CD8-positive, alpha-beta T cell (primary cell): ENCODE measurements at regions of chr2 and their contacts with region 1.

Region 1: GRCh38 chr2:157327621-157328500 is 2.2 kb upstream of the ERMN start:
- DNase-seq: peak; percentile 75 to 94 (median 89)
- ATAC-seq: peak; percentile 95
- H3K4me3 ChIP-seq: peak overlapping the region in 1 of 2 experiments; percentile 2
- H3K4me3 Mint-ChIP-seq: peak overlapping the region; percentile 64
- H3K27ac ChIP-seq: no peak overlapping the region
- H3K27ac Mint-ChIP-seq: peak overlapping the region; percentile 86
- H3K4me1 ChIP-seq: peaks cover 36% of the 10 kb centered on the region
- H3K4me1 Mint-ChIP-seq: peaks cover 53% of the 10 kb centered on the region
- H3K27me3 ChIP-seq: no peaks in the 10 kb centered on the region
- H3K27me3 Mint-ChIP-seq: no peaks in the 10 kb centered on the region
- CTCF ChIP-seq: peak; percentile 87

Region 2: DNA sequence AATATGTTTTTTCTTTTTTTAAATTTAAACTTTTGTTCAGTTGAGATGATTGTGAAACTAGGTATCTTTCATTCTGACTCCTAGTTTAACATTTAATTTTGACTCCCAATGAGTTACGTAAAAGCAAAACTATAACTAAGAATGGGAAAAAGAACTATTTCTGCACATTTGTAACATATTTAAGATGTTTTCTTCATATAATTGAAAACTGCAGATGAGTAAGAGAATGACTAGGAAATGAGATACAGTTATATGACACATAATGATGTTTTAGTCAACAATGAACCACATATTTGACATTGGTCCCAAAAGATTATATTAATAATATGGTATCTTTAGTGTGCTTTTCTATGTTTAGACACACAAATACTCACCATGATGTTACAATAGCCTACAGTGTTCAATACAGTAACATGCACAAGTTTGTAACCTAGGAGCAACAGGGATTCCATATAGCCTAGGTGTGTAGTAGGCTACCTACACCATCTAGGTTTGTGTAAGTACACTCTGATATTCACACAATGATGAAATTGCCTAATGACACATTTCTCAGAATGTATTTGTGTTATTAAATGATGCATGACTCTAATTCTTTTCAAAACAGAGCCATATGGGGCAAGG is 14.9 kb before region 1 on chr2:
- CTCF ChIA-PET with region 1: interaction called, 32 read pairs
- POLR2A ChIA-PET with region 1: no interaction called
- intact Hi-C with region 1: no loop called
- DNase-seq: no peak
- ATAC-seq: no peak
- H3K4me3 ChIP-seq: no peak overlapping the region
- H3K4me3 Mint-ChIP-seq: no peak overlapping the region
- H3K27ac ChIP-seq: no peak overlapping the region
- H3K27ac Mint-ChIP-seq: no peak overlapping the region
- H3K4me1 ChIP-seq: no peaks in the 10 kb centered on the region
- H3K4me1 Mint-ChIP-seq: no peaks in the 10 kb centered on the region
- H3K27me3 ChIP-seq: no peaks in the 10 kb centered on the region
- H3K27me3 Mint-ChIP-seq: no peaks in the 10 kb centered on the region
- CTCF ChIP-seq: no peak

Region 3: DNA sequence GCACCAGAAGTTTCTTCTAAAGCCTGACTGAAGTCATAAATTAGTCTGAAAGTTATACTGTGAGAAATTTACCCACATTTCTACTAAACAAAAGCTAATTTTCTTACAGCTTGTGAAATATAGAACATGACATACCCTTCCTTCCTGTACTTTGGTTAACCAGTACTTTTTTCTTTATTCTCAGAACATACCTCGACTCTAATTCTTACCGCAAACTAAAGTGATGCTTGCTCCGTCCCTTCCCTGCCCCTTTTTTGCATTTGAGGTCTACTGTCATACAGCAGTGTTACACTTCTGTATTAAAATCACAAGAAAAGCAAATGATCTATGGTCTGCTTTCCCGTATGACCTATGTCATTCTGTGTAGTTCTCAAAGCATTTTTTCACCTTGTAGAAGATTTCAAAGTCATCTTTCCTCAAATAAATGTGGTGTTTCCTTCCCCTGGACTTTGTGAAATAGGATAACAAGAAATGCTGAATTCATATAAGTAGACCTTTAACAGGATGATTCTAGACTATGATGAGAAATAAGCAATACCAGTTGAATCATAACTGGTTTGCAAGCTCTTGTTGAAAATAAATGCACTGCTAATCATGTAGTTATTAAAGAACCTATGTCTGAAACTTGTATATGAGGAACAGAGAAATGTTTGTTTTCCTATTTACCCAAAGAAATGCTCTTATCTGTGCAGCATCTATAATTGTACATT is 85.6 kb after region 1 on chr2:
- CTCF ChIA-PET with region 1: interaction called, 37 read pairs
- POLR2A ChIA-PET with region 1: interaction called, 12 read pairs
- intact Hi-C with region 1: no loop called
- DNase-seq: peak in 7 of 9 experiments; percentile 41 to 91 (median 64)
- ATAC-seq: peak; percentile 76
- H3K4me3 ChIP-seq: peak overlapping the region in 1 of 2 experiments; percentile 2
- H3K4me3 Mint-ChIP-seq: peak overlapping the region; percentile 44
- H3K27ac ChIP-seq: peak overlapping the region; percentile 49 to 80
- H3K27ac Mint-ChIP-seq: peak overlapping the region; percentile 91
- H3K4me1 ChIP-seq: peaks cover 95% of the 10 kb centered on the region
- H3K4me1 Mint-ChIP-seq: peaks cover 89% of the 10 kb centered on the region
- H3K27me3 ChIP-seq: no peaks in the 10 kb centered on the region
- H3K27me3 Mint-ChIP-seq: no peaks in the 10 kb centered on the region
- CTCF ChIP-seq: no peak

Region 4: GRCh38 chr2:157443795-157444640 is 116.2 kb after region 1 on chr2 and contains the start of gene CYTIP:
- CTCF ChIA-PET with region 1: interaction called, 303 read pairs
- POLR2A ChIA-PET with region 1: interaction called, 26 read pairs
- intact Hi-C with region 1: loop called in 1 of 2 experiments (anchors 2 kb)
- DNase-seq: peak in 7 of 9 experiments; percentile 52 to 88 (median 64)
- ATAC-seq: peak; percentile 35
- H3K4me3 ChIP-seq: peak within 1 kb of the TSS; percentile 80 to 83
- H3K4me3 Mint-ChIP-seq: peak within 1 kb of the TSS; percentile 91
- H3K27ac ChIP-seq: peak within 1 kb of the TSS; percentile 88 to 92
- H3K27ac Mint-ChIP-seq: peak within 1 kb of the TSS; percentile 98
- H3K4me1 ChIP-seq: peaks cover 35% of the 10 kb centered on the region
- H3K4me1 Mint-ChIP-seq: peaks cover 46% of the 10 kb centered on the region
- H3K27me3 ChIP-seq: no peaks in the 10 kb centered on the region
- H3K27me3 Mint-ChIP-seq: no peaks in the 10 kb centered on the region
- CTCF ChIP-seq: no peak
- total RNA-seq, gene CYTIP: 425 to 430 TPM

Region 5: DNA sequence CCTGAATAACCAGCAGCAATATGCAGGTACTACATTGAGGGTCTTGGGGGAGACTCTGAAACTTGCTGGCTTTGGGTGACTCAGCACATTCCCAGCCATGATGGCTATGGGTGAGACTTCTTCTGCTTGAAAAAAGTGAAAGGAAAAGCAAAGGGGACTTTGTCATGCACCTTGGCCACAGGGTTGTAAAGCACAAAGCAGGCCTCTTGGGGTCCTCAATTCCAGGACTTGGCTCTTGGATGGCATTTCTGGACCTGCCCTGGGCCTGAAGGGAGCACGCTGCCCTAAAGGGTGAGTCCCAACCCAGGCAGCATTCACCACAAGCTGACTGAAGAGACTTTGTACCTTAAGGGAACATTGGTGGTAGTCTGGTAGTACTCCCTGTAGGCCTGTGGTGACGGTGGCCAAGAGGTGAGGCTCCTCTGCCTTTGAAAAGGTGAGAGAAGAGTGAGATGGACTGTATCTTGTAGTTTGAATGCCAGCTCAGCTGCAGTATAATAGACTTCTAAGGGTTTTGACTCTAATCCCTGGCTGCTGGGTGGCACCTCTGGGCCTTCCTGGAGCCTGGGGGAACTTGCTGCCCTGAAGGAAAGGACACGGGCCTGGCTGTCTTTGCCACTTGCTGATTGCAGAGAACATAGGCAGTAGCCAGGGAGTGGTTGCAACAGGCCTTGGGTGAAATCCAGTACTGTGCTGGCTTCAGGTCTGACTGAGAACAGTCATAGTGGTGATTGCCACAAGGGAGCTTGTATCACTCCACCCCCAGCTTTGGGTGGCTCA is 152.5 kb after region 1 on chr2:
- CTCF ChIA-PET with region 1: interaction called, 20 read pairs
- POLR2A ChIA-PET with region 1: no interaction called
- intact Hi-C with region 1: no loop called
- DNase-seq: no peak
- ATAC-seq: no peak
- H3K4me3 ChIP-seq: no peak overlapping the region
- H3K4me3 Mint-ChIP-seq: no peak overlapping the region
- H3K27ac ChIP-seq: no peak overlapping the region
- H3K27ac Mint-ChIP-seq: peak overlapping the region; percentile 60
- H3K4me1 ChIP-seq: peaks cover 18% of the 10 kb centered on the region
- H3K4me1 Mint-ChIP-seq: peaks cover 22% of the 10 kb centered on the region
- H3K27me3 ChIP-seq: no peaks in the 10 kb centered on the region
- H3K27me3 Mint-ChIP-seq: no peaks in the 10 kb centered on the region
- CTCF ChIP-seq: no peak

Region 6: DNA sequence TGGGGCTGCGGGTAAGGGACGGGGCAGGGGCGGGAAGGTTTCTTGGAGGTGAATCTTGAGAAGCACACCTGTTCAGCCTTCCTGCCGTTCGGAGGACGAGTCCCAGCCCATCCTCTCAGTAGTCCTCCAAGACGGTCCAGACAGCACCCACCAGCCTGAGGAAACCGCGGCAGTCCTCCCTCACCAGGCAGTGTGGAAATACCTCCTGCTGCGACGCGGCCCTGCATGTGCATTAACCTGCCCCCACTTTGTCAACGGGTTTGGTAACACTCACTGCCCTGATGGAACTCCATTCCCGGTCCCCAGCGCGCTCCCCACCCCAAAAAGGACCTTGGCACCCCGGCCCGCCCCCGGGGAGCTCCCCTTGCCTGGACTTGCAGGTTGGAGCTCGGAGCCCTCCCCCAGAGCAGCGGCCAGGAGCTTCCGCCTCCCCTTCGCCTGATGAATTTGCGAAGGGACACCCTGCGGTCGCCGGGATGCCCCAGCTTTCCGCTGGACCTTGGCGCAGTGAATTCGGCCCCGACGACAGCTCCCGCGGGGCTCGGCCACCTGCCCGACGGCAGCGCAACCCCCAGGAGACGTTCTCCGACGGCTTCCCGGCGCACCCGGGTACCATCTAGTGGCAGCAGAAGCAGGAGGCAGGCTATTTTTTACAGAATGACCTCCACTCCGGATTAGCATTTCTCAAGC is 269.3 kb after region 1 on chr2:
- CTCF ChIA-PET with region 1: interaction called, 38 read pairs
- POLR2A ChIA-PET with region 1: interaction called, 3 read pairs
- intact Hi-C with region 1: loop called (anchors 1 to 5 kb)
- DNase-seq: peak; percentile 18 to 75 (median 57)
- ATAC-seq: peak; percentile 66
- H3K4me3 ChIP-seq: peak overlapping the region; percentile 34 to 36
- H3K4me3 Mint-ChIP-seq: peak overlapping the region; percentile 66
- H3K27ac ChIP-seq: no peak overlapping the region
- H3K27ac Mint-ChIP-seq: no peak overlapping the region
- H3K4me1 ChIP-seq: no peaks in the 10 kb centered on the region
- H3K4me1 Mint-ChIP-seq: peaks cover 10% of the 10 kb centered on the region
- H3K27me3 ChIP-seq: peaks cover 0 to 2% of the 10 kb centered on the region in 2 experiments
- H3K27me3 Mint-ChIP-seq: peaks cover 10% of the 10 kb centered on the region
- CTCF ChIP-seq: peak; percentile 72